T-cell (primary cell): ENCODE measurements at regions of chr18 and their contacts with region 1.

Region 1: DNA sequence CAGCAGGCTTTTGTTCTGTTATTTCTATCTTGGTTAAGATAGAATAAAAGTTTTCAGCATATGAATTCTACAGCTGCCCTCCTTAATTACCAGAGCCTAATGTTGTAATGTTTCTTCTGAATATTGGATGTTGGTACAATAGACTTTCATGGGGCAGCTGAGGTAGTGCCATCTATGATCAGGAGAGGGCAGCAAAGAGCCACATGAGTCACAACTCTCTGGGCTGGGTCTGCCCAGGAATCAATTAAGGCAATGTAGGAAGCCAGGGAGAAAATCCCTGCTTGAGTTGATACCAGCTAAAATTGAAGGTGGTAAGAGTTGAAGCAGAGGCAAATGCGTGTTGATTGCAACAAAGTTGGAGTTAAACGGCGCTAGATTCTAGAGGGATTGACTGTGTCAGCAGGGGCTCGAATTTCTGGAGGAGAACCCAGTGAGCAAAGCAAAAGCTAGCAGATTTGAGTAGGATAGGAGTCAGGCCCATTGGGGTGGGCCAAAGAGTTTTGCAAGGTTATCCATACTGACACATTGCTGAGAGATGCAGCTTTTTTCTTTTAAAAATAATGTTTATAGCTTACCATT is 10.6 kb upstream of the MC5R start:
- DNase-seq: peak in 30 of 35 experiments; percentile 3 to 68 (median 32)
- ATAC-seq: peak; percentile 68 to 83 (median 78)
- H3K4me3 ChIP-seq: no peak overlapping the region
- H3K4me3 Mint-ChIP-seq: no peak overlapping the region
- H3K27ac ChIP-seq: no peak overlapping the region
- H3K27ac Mint-ChIP-seq: no peak overlapping the region
- H3K4me1 ChIP-seq: no peaks in the 10 kb centered on the region
- H3K4me1 Mint-ChIP-seq: peaks cover 0 to 2% (median 0%) of the 10 kb centered on the region in 3 donors
- H3K27me3 ChIP-seq: peaks cover 3% of the 10 kb centered on the region in 2 experiments
- H3K27me3 Mint-ChIP-seq: peaks cover 12 to 14% of the 10 kb centered on the region in 2 donors

Region 2: GRCh38 chr18:13823707-13824395 is 10.5 kb after region 1 on chr18 and contains the start of gene MC5R:
- CTCF ChIA-PET with region 1: interaction called, 11 to 16 read pairs
- POLR2A ChIA-PET with region 1: no interaction called
- DNase-seq: peak; percentile 24 to 80 (median 59)
- ATAC-seq: peak; percentile 92 to 98 (median 94)
- H3K4me3 ChIP-seq: peak within 1 kb of the TSS in 1 of 2 donors; percentile 71
- H3K4me3 Mint-ChIP-seq: peak within 1 kb of the TSS; percentile 41 to 55 (median 51)
- H3K27ac ChIP-seq: no peak within 1 kb of the TSS
- H3K27ac Mint-ChIP-seq: peak within 1 kb of the TSS in 1 of 2 donors; percentile 40
- H3K4me1 ChIP-seq: peaks cover 0 to 7% of the 10 kb centered on the region in 2 experiments
- H3K4me1 Mint-ChIP-seq: peaks cover 0 to 8% (median 2%) of the 10 kb centered on the region in 3 donors
- H3K27me3 ChIP-seq: peaks cover 3 to 41% of the 10 kb centered on the region in 2 experiments
- H3K27me3 Mint-ChIP-seq: peaks cover 25 to 33% of the 10 kb centered on the region in 2 donors
- total RNA-seq, gene MC5R: not detected